Panc1 (cell line): ENCODE measurements at regions of chr22 and their contacts with region 1.

Region 1: DNA sequence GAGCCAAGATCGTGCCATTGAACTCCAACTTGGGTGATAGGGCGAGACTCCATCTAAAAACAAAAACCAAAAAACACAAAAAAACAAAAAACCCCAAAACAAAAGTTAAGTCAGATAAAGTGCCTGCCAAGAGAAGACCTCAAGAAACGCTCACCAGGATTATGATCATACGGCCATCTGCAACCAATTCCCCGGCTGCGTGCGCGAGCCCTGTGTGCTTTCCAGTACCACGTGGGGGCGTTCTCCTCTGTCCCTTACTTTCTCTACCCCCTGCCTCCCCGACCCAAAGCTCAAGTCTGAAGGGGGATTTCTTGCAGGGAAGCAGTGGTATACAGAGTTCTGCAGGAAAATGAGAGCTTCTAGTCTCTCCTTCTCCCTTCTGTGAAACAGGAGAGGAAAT is 10.5 kb upstream of the RPS19BP1 start:
- DNase-seq: no peak
- ATAC-seq: no peak
- H3K4me3 ChIP-seq: no peak overlapping the region
- H3K27ac ChIP-seq: no peak overlapping the region
- H3K4me1 ChIP-seq: no peaks in the 10 kb centered on the region
- H3K27me3 ChIP-seq: peaks cover 5% of the 10 kb centered on the region; the same call in 1 of the 2 replicates
- CTCF ChIP-seq: no peak; the same call in 1 of the 2 replicates

Region 2: DNA sequence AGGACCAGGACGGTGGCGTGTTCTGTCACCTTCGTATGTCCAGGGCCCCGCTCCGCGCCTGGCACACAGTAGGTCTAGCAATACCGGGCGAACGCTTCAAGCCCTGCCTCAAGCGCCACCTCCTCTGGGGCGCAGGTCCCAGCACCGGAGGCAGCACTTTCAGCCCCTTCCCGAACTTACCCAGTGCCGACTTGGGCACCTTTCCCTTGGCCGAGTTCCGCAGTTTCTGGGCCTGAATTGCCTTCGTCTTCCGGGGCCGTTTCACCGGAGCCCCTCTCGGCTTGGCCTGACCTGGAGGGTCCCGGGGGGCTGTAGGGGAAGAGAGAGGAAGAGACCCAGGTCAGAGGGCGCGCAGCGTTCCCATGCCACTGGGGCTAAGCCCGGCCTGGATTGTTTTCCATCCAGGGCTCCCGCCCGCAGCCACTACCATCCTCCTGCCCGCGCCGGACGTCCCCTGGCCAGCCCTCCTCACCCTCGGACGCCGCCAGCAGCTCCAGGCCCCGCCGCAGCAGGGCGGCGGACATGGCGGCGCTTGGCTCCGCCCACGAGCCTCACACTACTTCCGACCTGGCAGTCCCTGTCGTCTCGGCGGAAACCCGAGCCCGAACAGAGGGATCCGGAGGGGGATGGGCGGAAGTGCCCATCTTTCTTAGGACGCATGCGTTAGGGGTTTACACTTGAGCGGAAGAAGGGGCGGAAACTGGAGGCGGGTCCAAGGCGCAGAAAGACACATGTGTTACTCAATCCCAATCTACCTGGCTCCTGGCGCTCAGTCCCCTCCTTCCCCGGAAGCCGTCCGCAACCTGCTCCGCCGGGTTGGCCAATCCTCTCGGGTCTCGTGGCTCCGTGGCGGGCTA is 10.7 kb before region 1 on chr22 and contains the start of gene RPS19BP1:
- CTCF ChIA-PET with region 1: no interaction called
- POLR2A ChIA-PET with region 1: no interaction called
- in situ Hi-C with region 1: no loop called
- intact Hi-C with region 1: no loop called
- DNase-seq: peak; percentile 97
- ATAC-seq: peak; percentile 89
- H3K4me3 ChIP-seq: peak within 1 kb of the TSS; percentile 93 to 94
- H3K27ac ChIP-seq: peak within 1 kb of the TSS; percentile 93
- H3K4me1 ChIP-seq: peaks cover 49% of the 10 kb centered on the region
- H3K27me3 ChIP-seq: no peaks in the 10 kb centered on the region
- CTCF ChIP-seq: no peak
- total RNA-seq, gene RPS19BP1: 123 TPM

Region 3: GRCh38 chr22:39685336-39686177 is 142.5 kb after region 1 on chr22:
- CTCF ChIA-PET with region 1: no interaction called
- POLR2A ChIA-PET with region 1: no interaction called
- in situ Hi-C with region 1: no loop called
- intact Hi-C with region 1: no loop called
- DNase-seq: no peak
- ATAC-seq: no peak
- H3K4me3 ChIP-seq: no peak overlapping the region
- H3K27ac ChIP-seq: no peak overlapping the region
- H3K4me1 ChIP-seq: no peaks in the 10 kb centered on the region
- H3K27me3 ChIP-seq: no peaks in the 10 kb centered on the region
- CTCF ChIP-seq: no peak

Region 4: GRCh38 chr22:40024201-40025061 is 481.3 kb after region 1 on chr22:
- CTCF ChIA-PET with region 1: interaction called, 5 read pairs
- POLR2A ChIA-PET with region 1: no interaction called
- in situ Hi-C with region 1: no loop called
- intact Hi-C with region 1: loop called (anchors 5 kb)
- DNase-seq: peak; percentile 30
- ATAC-seq: peak; percentile 90
- H3K4me3 ChIP-seq: no peak overlapping the region
- H3K27ac ChIP-seq: no peak overlapping the region
- H3K4me1 ChIP-seq: no peaks in the 10 kb centered on the region
- H3K27me3 ChIP-seq: no peaks in the 10 kb centered on the region
- CTCF ChIP-seq: peak; percentile 89